CD4-positive, alpha-beta memory T cell (primary cell): ENCODE measurements at regions of chr17 and their contacts with region 1.

Region 1: GRCh38 chr17:17890773-17891759 is 54.3 kb upstream of the SREBF1 start:
- DNase-seq: peak in 4 of 5 donors; percentile 30 to 40 (median 35)
- H3K4me3 ChIP-seq: no peak overlapping the region
- H3K4me3 Mint-ChIP-seq: no peak overlapping the region
- H3K27ac ChIP-seq: no peak overlapping the region
- H3K27ac Mint-ChIP-seq: peak overlapping the region in 5 of 7 donors; percentile 25 to 88 (median 64)
- H3K4me1 ChIP-seq: no peaks in the 10 kb centered on the region
- H3K4me1 Mint-ChIP-seq: peaks cover 0 to 5% (median 3%) of the 10 kb centered on the region in 4 donors
- H3K27me3 ChIP-seq: no peaks in the 10 kb centered on the region
- H3K27me3 Mint-ChIP-seq: no peaks in the 10 kb centered on the region

Region 2: GRCh38 chr17:17809527-17810373 is 81.3 kb before region 1 on chr17:
- CTCF ChIA-PET with region 1: no interaction called
- POLR2A ChIA-PET with region 1: no interaction called
- intact Hi-C with region 1: no loop called
- DNase-seq: no peak
- H3K4me3 ChIP-seq: no peak overlapping the region
- H3K4me3 Mint-ChIP-seq: no peak overlapping the region
- H3K27ac ChIP-seq: no peak overlapping the region
- H3K27ac Mint-ChIP-seq: no peak overlapping the region
- H3K4me1 ChIP-seq: peaks cover 8% of the 10 kb centered on the region
- H3K4me1 Mint-ChIP-seq: peaks cover 0 to 12% (median 3%) of the 10 kb centered on the region in 4 donors
- H3K27me3 ChIP-seq: no peaks in the 10 kb centered on the region
- H3K27me3 Mint-ChIP-seq: no peaks in the 10 kb centered on the region

Region 3: DNA sequence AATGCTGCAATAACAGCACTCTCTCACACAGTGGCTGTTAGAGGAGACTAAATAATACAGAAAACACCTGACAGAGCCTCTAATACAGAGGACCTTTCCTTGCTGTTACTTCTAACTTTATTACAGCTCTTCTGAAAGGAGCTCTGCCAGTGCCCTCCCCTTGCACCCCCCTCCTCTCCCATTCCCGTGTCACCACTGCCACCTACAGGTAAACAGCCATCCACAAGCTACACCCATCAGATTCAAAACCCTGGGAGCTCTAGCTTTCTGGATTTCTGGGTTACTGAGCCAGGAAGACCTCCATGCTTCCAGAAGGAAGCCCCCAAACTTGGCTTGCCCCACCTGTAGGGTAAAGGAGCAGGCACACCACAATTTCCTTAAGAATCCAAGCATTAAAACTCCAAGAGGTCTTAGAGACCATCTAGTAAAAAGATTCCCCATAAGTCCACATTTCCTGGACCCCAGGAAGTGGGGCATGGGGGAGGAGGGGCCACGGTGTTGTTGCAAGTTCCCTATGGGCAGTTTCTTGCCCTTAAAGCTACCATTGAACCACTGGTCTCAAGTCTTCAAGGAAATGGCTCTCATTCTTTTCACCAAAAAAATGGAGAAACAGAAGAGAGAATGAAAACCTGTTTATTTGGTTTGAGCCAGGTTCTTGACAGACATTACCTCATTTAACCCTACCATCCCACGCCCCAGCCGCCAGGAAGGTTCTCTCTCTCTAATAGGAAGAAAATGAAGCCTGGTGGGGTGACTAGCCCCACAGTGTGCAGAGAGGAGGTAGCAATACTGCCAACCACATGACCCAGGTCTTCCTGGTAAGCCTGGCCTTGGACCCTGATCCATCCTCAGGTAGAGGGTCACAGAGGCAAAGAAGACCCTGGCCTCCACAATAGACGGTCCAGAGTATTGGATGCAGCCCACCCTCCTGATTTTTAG is 28.4 kb after region 1 on chr17:
- CTCF ChIA-PET with region 1: interaction called, 12 read pairs
- POLR2A ChIA-PET with region 1: no interaction called
- intact Hi-C with region 1: no loop called
- DNase-seq: peak; percentile 58 to 71 (median 61)
- H3K4me3 ChIP-seq: no peak overlapping the region
- H3K4me3 Mint-ChIP-seq: no peak overlapping the region
- H3K27ac ChIP-seq: no peak overlapping the region
- H3K27ac Mint-ChIP-seq: no peak overlapping the region
- H3K4me1 ChIP-seq: peaks cover 3% of the 10 kb centered on the region
- H3K4me1 Mint-ChIP-seq: peaks cover 6 to 25% (median 8%) of the 10 kb centered on the region in 4 donors
- H3K27me3 ChIP-seq: no peaks in the 10 kb centered on the region
- H3K27me3 Mint-ChIP-seq: no peaks in the 10 kb centered on the region

Region 4: DNA sequence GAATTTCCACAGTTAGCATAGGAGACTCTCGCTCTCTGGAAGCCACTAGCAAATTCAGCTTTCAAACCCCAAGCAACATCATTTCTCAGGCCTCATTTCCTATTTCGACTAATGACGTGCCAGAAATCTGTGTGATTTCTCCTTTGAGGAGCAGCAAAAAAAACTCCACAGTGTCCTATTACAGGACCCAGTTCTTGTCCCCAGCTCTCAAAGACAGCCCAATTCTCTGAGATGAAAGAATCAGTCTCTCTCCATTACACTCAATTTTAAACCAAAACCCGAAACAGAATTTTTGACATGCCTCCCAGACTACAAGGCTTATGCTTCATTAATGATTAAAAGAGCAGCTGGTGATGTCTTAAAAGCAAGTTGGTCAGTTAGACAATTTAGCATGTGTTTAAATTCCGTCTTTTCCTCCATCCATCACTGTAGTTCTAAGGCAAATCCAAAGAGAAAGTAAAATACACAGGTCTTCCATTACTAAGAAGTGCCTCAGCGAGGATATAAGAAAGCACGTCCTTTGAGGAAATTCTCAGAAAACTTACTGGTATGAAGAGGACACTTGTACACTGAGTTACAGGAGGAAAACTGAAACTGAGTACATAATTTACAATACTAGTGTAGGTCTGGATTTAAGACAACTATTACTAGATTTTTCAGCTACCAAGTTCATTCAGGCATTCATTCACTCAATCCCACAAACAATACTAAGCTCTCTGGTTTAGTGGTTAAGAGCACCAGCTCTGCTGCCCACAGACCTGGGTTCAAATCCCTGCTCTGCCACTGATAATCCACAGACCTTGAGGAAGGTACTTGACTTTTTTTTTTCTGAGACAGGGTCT is 68.7 kb after region 1 on chr17:
- CTCF ChIA-PET with region 1: no interaction called
- POLR2A ChIA-PET with region 1: no interaction called
- intact Hi-C with region 1: loop called (anchors 10 kb)
- DNase-seq: peak in 4 of 5 donors; percentile 26 to 38 (median 28)
- H3K4me3 ChIP-seq: peak overlapping the region; percentile 32 to 75
- H3K4me3 Mint-ChIP-seq: peak overlapping the region; percentile 79 to 97 (median 86)
- H3K27ac ChIP-seq: peak overlapping the region; percentile 65
- H3K27ac Mint-ChIP-seq: peak overlapping the region; percentile 91 to 100 (median 96)
- H3K4me1 ChIP-seq: peaks cover 46% of the 10 kb centered on the region
- H3K4me1 Mint-ChIP-seq: peaks cover 49 to 74% (median 61%) of the 10 kb centered on the region in 4 donors
- H3K27me3 ChIP-seq: no peaks in the 10 kb centered on the region
- H3K27me3 Mint-ChIP-seq: no peaks in the 10 kb centered on the region